ENCODE measurements at regions of chr18 and their contacts with region 1.

Region 1: DNA sequence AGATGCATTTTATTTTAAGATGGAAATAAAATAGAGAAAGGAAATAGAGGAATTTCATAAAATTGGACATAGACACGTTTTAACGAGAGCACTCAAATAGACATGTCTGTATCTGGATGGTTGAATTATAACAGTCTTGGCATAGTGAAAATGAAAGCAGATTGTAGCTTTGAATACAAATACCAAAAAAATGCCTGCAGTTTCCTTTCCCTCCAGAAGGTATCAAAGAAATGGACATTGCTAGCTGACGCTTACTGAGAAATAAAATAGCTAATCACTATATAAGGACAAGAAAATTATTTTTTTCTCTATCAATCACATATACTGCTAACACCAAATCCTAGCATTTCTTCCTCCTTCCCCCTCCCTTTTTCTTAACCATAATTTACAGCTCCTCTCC is 11.4 kb upstream of the MAPRE2 start:
- DNase-seq: peak; percentile 63
- ATAC-seq: peak; percentile 78
- H3K4me3 ChIP-seq: peak overlapping the region; percentile 44 to 80 (median 61)
- H3K4me3 Mint-ChIP-seq: peak overlapping the region; percentile 85
- H3K27ac ChIP-seq: peak overlapping the region; percentile 90 to 93
- H3K27ac Mint-ChIP-seq: peak overlapping the region; percentile 93
- H3K4me1 ChIP-seq: peaks cover 29 to 34% of the 10 kb centered on the region in 2 donors
- H3K4me1 Mint-ChIP-seq: peaks cover 44% of the 10 kb centered on the region
- H3K27me3 ChIP-seq: no peaks in the 10 kb centered on the region
- H3K27me3 Mint-ChIP-seq: no peaks in the 10 kb centered on the region
- CTCF ChIP-seq: peak; percentile 44

Region 2: DNA sequence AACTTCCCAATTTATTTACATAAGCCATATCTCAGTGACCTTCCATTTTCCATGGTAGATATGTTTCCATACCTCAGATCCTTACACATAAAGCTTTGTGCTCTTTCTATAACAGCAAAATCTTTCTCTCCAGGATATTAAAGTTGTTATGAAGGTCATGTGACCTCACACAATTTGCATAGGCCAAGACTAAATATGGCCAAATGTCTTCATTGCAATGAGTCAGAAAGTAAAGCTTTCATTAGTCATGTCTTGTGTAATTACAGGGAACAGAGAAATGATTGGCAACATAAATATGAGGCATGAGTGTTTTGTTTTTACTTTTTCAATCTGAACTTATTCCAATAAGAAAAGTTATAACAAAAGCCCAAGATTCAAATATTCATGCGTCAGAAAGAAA is 1208.3 kb before region 1 on chr18:
- CTCF ChIA-PET with region 1: no interaction called
- POLR2A ChIA-PET with region 1: no interaction called
- intact Hi-C with region 1: no loop called
- DNase-seq: no peak
- ATAC-seq: no peak
- H3K4me3 ChIP-seq: no peak overlapping the region
- H3K4me3 Mint-ChIP-seq: no peak overlapping the region
- H3K27ac ChIP-seq: no peak overlapping the region
- H3K27ac Mint-ChIP-seq: no peak overlapping the region
- H3K4me1 ChIP-seq: no peaks in the 10 kb centered on the region
- H3K4me1 Mint-ChIP-seq: no peaks in the 10 kb centered on the region
- H3K27me3 ChIP-seq: no peaks in the 10 kb centered on the region
- H3K27me3 Mint-ChIP-seq: no peaks in the 10 kb centered on the region
- CTCF ChIP-seq: no peak

Region 3: DNA sequence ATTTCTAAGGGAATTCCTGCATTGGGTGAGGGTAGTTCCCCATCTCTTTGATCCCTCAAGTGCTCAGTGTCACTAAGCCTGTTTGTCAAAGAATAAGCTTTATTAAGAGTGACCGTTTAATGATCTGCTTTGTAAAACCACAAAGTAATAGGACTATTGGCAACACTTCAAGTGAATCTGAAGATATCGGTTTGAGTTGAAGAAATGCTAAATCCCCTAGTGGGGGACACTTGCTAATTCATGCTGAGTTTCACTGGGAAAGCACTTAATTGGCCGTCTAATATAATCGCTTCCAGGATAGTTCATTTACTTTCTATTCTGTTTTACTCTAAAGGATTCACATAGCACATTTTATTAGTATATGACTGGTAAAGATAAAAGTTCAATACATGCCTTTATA is 265.3 kb before region 1 on chr18:
- CTCF ChIA-PET with region 1: no interaction called
- POLR2A ChIA-PET with region 1: no interaction called
- intact Hi-C with region 1: no loop called
- DNase-seq: no peak
- ATAC-seq: no peak
- H3K4me3 ChIP-seq: no peak overlapping the region
- H3K4me3 Mint-ChIP-seq: no peak overlapping the region
- H3K27ac ChIP-seq: no peak overlapping the region
- H3K27ac Mint-ChIP-seq: no peak overlapping the region
- H3K4me1 ChIP-seq: no peaks in the 10 kb centered on the region
- H3K4me1 Mint-ChIP-seq: no peaks in the 10 kb centered on the region
- H3K27me3 ChIP-seq: no peaks in the 10 kb centered on the region
- H3K27me3 Mint-ChIP-seq: peaks cover 3% of the 10 kb centered on the region
- CTCF ChIP-seq: no peak

Region 4: GRCh38 chr18:35005963-35006577 is 23.7 kb before region 1 on chr18:
- CTCF ChIA-PET with region 1: interaction called, 31 read pairs
- POLR2A ChIA-PET with region 1: no interaction called
- intact Hi-C with region 1: loop called (anchors 2 kb)
- DNase-seq: peak; percentile 74
- ATAC-seq: peak; percentile 63
- H3K4me3 ChIP-seq: no peak overlapping the region
- H3K4me3 Mint-ChIP-seq: no peak overlapping the region
- H3K27ac ChIP-seq: no peak overlapping the region
- H3K27ac Mint-ChIP-seq: no peak overlapping the region
- H3K4me1 ChIP-seq: no peaks in the 10 kb centered on the region
- H3K4me1 Mint-ChIP-seq: no peaks in the 10 kb centered on the region
- H3K27me3 ChIP-seq: no peaks in the 10 kb centered on the region
- H3K27me3 Mint-ChIP-seq: peaks cover 4% of the 10 kb centered on the region
- CTCF ChIP-seq: peak; percentile 77

Region 5: DNA sequence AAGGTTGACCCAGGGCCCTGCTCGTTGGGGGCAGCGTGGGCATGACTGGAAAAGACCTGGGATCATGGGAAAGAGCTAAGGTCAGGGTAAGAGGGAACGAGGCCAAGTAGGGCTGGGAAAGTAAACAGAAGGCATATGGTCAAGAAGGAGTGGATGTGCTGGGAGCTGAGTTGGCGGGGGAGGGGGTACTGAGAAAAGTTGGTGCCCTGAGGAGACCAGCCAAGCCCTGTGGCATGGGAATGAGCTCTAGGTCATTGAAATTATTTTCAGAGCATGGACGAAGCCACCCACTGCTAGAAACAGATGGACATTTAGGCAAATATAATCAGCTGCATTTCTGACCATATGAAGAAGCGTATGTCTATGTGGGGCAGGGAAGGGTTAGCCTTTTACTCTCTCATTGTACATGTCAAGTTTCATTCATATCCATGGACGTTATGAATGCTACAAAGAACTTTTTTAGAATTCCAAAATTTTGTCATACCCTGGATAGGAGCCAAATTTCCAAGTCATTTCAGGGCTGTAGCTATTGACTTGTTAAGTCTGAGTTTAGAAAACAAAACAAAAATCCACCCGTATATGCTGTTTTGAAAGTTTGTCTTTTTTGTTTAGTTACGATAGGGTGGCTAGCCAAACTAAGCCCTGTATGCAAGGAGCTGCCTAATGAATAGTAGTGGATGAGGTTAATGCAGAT is 30.5 kb after region 1 on chr18:
- CTCF ChIA-PET with region 1: interaction called, 19 read pairs
- POLR2A ChIA-PET with region 1: no interaction called
- intact Hi-C with region 1: no loop called
- DNase-seq: no peak
- ATAC-seq: no peak
- H3K4me3 ChIP-seq: no peak overlapping the region
- H3K4me3 Mint-ChIP-seq: no peak overlapping the region
- H3K27ac ChIP-seq: no peak overlapping the region
- H3K27ac Mint-ChIP-seq: no peak overlapping the region
- H3K4me1 ChIP-seq: peaks cover 0 to 10% of the 10 kb centered on the region in 2 donors
- H3K4me1 Mint-ChIP-seq: peaks cover 58% of the 10 kb centered on the region
- H3K27me3 ChIP-seq: no peaks in the 10 kb centered on the region
- H3K27me3 Mint-ChIP-seq: no peaks in the 10 kb centered on the region
- CTCF ChIP-seq: no peak

Region 6: GRCh38 chr18:35122586-35123224 is 92.9 kb after region 1 on chr18:
- CTCF ChIA-PET with region 1: interaction called, 75 read pairs
- POLR2A ChIA-PET with region 1: no interaction called
- intact Hi-C with region 1: no loop called
- DNase-seq: peak; percentile 44
- ATAC-seq: peak; percentile 80
- H3K4me3 ChIP-seq: no peak overlapping the region
- H3K4me3 Mint-ChIP-seq: peak overlapping the region; percentile 13
- H3K27ac ChIP-seq: peak overlapping the region in 1 of 2 donors; percentile 11
- H3K27ac Mint-ChIP-seq: peak overlapping the region; percentile 64
- H3K4me1 ChIP-seq: peaks cover 2 to 12% of the 10 kb centered on the region in 2 donors
- H3K4me1 Mint-ChIP-seq: peaks cover 42% of the 10 kb centered on the region
- H3K27me3 ChIP-seq: no peaks in the 10 kb centered on the region
- H3K27me3 Mint-ChIP-seq: no peaks in the 10 kb centered on the region
- CTCF ChIP-seq: peak; percentile 23

Region 7: GRCh38 chr18:35185771-35186170 is 156.0 kb after region 1 on chr18:
- CTCF ChIA-PET with region 1: interaction called, 10 read pairs
- POLR2A ChIA-PET with region 1: no interaction called
- intact Hi-C with region 1: no loop called
- DNase-seq: no peak
- ATAC-seq: no peak
- H3K4me3 ChIP-seq: no peak overlapping the region
- H3K4me3 Mint-ChIP-seq: no peak overlapping the region
- H3K27ac ChIP-seq: no peak overlapping the region
- H3K27ac Mint-ChIP-seq: no peak overlapping the region
- H3K4me1 ChIP-seq: peaks cover 0 to 9% of the 10 kb centered on the region in 2 donors
- H3K4me1 Mint-ChIP-seq: peaks cover 14% of the 10 kb centered on the region
- H3K27me3 ChIP-seq: no peaks in the 10 kb centered on the region
- H3K27me3 Mint-ChIP-seq: no peaks in the 10 kb centered on the region
- CTCF ChIP-seq: no peak

Region 8: GRCh38 chr18:35343936-35344735 is 314.4 kb after region 1 on chr18 and contains the start of gene ZNF24:
- CTCF ChIA-PET with region 1: interaction called, 6 read pairs
- POLR2A ChIA-PET with region 1: interaction called, 4 read pairs
- intact Hi-C with region 1: loop called (anchors 5 kb)
- DNase-seq: peak; percentile 96
- ATAC-seq: peak; percentile 84
- H3K4me3 ChIP-seq: peak within 1 kb of the TSS; percentile 84 to 99 (median 97)
- H3K4me3 Mint-ChIP-seq: peak within 1 kb of the TSS; percentile 100
- H3K27ac ChIP-seq: peak within 1 kb of the TSS; percentile 99
- H3K27ac Mint-ChIP-seq: peak within 1 kb of the TSS; percentile 99
- H3K4me1 ChIP-seq: peaks cover 24 to 35% of the 10 kb centered on the region in 2 donors
- H3K4me1 Mint-ChIP-seq: peaks cover 64% of the 10 kb centered on the region
- H3K27me3 ChIP-seq: no peaks in the 10 kb centered on the region
- H3K27me3 Mint-ChIP-seq: no peaks in the 10 kb centered on the region
- CTCF ChIP-seq: no peak
- total RNA-seq, gene ZNF24: 80.1 and 83.7 TPM in 2 replicates

Region 9: DNA sequence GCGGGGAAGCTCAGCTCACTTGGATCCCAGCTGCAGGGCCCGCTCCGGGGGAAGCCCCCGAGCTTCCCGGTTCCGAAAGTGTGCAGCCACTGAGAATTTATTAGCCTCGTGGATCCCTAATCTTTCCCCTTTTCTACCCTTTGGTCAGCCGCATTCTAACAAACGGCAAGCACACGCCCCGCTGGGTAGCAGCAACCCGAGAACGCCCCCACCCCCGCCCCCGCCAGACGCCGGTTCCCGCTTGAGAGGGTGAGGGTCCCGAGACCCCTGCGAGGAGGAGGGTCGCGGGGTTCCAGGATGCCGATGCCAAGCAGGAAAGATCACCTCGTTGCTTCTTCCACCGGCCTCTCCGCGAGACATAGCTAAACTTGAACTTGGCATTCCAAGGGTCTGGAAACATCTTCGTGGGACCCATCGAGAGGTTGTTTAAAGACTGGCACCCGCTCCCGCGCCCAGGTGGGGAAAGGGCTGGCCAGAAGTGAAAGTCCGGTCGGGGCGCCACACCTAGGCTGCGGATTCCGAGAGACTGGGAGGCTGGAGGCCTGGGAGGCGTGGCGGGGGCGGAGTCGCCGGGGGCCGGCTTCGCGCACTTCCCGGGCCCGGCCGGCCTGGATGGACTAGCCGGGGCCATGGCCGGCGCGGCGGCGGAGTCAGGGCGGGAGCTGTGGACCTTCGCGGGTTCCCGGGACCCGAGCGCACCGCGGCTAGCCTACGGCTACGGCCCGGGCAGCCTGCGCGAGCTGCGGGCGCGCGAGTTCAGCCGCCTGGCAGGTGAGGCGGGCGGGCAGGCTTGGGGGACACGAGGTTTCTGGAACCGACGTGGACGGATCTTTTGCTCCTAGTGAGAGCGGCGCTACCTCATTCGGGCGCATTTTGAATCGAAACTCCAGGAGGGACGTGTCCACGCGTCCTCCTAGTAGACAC is 1157.4 kb after region 1 on chr18 and contains the start of gene MOCOS:
- CTCF ChIA-PET with region 1: no interaction called
- POLR2A ChIA-PET with region 1: no interaction called
- intact Hi-C with region 1: no loop called
- DNase-seq: peak; percentile 56
- ATAC-seq: peak; percentile 70
- H3K4me3 ChIP-seq: peak within 1 kb of the TSS; percentile 53 to 92 (median 66)
- H3K4me3 Mint-ChIP-seq: peak within 1 kb of the TSS; percentile 88
- H3K27ac ChIP-seq: peak within 1 kb of the TSS in 1 of 2 donors; percentile 50
- H3K27ac Mint-ChIP-seq: no peak within 1 kb of the TSS
- H3K4me1 ChIP-seq: peaks cover 26 to 31% of the 10 kb centered on the region in 2 donors
- H3K4me1 Mint-ChIP-seq: peaks cover 36% of the 10 kb centered on the region
- H3K27me3 ChIP-seq: peaks cover 0 to 22% (median 10%) of the 10 kb centered on the region in 4 experiments
- H3K27me3 Mint-ChIP-seq: peaks cover 31% of the 10 kb centered on the region
- CTCF ChIP-seq: no peak
- total RNA-seq, gene MOCOS: 0.05 TPM in 2 replicates